ENCODE measurements at regions of chr6 and their contacts with region 1.

Region 1: DNA sequence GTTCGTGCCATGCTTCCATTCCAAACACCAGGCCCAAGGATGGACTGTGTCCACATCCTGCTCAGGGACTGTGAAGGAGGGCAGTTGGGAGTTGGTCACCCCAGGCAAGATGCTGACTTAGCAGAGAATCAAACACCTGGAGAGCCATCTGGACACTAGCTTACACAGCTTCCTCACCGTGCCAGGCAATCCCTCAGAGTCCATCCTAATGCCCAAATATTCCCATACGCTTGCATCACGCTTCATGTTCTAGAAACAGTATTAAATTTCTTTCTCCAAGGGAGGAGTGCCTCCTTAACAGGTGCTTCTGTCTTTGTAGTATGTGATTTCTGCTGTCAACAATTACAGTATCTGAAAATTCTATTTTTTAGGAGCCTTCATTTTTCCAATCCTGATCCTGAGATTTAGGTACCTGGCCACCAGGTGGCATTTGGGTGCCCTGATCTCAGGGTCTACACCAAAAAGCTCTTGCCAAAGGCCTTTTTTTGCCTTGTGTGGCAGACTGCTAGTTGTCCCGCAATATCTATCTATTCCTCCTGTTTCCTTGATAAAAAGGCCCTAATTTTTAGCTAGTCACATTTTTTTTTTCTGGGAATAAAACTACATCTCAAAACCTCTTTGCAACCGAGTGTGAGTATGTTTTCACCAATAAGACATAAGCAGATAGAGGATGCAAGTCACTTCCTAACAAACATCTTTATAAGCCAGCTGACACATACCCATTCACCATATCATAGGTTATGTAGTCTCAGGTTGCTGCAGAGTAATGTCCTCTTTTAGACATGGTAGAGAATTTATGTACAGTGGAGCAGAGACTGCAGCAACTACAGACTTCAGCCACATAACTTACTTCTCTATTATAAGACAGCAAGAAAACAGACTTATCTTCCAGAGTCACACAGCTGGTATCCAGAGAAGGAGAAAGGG is 85.0 kb downstream of the PREP start:
- DNase-seq: no peak
- H3K4me3 ChIP-seq: no peak overlapping the region
- H3K27ac ChIP-seq: no peak overlapping the region
- H3K4me1 ChIP-seq: no peaks in the 10 kb centered on the region
- H3K27me3 ChIP-seq: no peaks in the 10 kb centered on the region
- CTCF ChIP-seq: no peak
- EP300 ChIP-seq: no peak
- POLR2A ChIP-seq: no peak

Region 2: DNA sequence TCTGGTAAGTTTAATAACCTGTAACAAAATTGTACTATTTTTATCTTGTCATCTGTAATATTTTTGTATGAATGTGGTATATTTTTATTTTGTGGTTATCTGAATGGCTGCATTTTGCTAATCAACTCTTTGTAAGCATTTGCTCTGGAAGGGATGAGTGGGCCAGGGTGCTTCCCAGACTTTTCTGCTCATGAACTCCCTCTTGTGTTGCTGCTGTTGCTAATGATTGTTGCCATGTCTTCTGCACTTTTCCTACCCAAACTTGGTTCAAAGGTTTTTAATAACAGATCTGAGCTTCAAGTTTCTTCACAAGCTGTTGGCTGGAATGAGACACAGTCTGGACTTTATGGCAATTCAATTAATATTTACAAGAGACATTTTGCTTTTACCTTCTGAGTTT is 1463.8 kb before region 1 on chr6:
- intact Hi-C with region 1: no loop called
- DNase-seq: no peak
- H3K4me3 ChIP-seq: no peak overlapping the region
- H3K27ac ChIP-seq: no peak overlapping the region
- H3K4me1 ChIP-seq: no peaks in the 10 kb centered on the region
- H3K27me3 ChIP-seq: no peaks in the 10 kb centered on the region
- CTCF ChIP-seq: no peak
- EP300 ChIP-seq: no peak
- POLR2A ChIP-seq: no peak

Region 3: DNA sequence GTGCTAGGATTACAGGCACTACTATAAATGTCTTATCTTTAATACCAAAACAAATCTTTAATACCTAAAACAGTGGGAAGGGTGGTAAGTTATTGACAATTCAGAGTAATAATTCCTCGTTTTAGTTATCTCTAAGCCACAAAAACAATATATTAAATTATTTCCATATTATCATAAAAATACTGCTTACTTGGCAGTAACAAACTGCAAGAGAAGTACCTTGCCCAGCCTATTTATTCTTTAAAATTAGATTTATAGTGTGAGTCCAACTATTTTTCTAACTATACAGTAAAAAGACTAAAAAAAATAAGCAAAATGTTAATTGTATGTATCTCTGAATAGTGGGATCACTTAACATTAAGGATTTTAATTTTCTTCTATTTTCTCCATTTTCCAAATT is 581.3 kb before region 1 on chr6:
- intact Hi-C with region 1: no loop called
- DNase-seq: no peak
- H3K4me3 ChIP-seq: no peak overlapping the region
- H3K27ac ChIP-seq: no peak overlapping the region
- H3K4me1 ChIP-seq: no peaks in the 10 kb centered on the region
- H3K27me3 ChIP-seq: no peaks in the 10 kb centered on the region
- CTCF ChIP-seq: no peak
- EP300 ChIP-seq: no peak
- POLR2A ChIP-seq: no peak

Region 4: DNA sequence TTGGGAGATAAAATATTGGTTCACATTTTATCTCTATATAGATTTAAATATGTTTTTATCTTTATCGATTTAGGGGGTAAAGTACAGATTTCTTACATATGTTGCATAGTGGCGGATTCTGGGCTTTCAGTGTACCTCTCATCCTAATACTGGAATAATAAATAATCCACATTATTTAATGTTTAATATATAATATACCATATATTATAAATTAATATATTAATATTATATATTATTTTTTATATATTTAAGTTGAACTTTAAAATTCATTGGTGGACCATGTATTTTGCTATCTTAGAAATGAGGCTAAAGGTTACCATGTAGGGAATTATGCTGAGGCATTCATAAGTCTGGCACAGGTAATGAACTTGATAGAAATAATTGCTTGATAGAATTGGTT is 48.5 kb before region 1 on chr6:
- intact Hi-C with region 1: loop called in 1 of 4 experiments (anchors 2 kb)
- DNase-seq: no peak
- H3K4me3 ChIP-seq: no peak overlapping the region
- H3K27ac ChIP-seq: no peak overlapping the region
- H3K4me1 ChIP-seq: no peaks in the 10 kb centered on the region
- H3K27me3 ChIP-seq: no peaks in the 10 kb centered on the region
- CTCF ChIP-seq: no peak
- EP300 ChIP-seq: no peak
- POLR2A ChIP-seq: no peak

Region 5: GRCh38 chr6:105336986-105337385 is 19.1 kb after region 1 on chr6:
- intact Hi-C with region 1: loop called in 1 of 4 experiments (anchors 2 kb)
- DNase-seq: no peak
- H3K4me3 ChIP-seq: no peak overlapping the region
- H3K27ac ChIP-seq: no peak overlapping the region
- H3K4me1 ChIP-seq: no peaks in the 10 kb centered on the region
- H3K27me3 ChIP-seq: no peaks in the 10 kb centered on the region
- CTCF ChIP-seq: no peak
- EP300 ChIP-seq: no peak
- POLR2A ChIP-seq: no peak

Region 6: GRCh38 chr6:105500693-105501092 is 182.8 kb after region 1 on chr6:
- intact Hi-C with region 1: no loop called
- DNase-seq: no peak
- H3K4me3 ChIP-seq: no peak overlapping the region
- H3K27ac ChIP-seq: no peak overlapping the region
- H3K4me1 ChIP-seq: no peaks in the 10 kb centered on the region
- H3K27me3 ChIP-seq: no peaks in the 10 kb centered on the region
- CTCF ChIP-seq: no peak
- EP300 ChIP-seq: no peak
- POLR2A ChIP-seq: no peak

Region 7: DNA sequence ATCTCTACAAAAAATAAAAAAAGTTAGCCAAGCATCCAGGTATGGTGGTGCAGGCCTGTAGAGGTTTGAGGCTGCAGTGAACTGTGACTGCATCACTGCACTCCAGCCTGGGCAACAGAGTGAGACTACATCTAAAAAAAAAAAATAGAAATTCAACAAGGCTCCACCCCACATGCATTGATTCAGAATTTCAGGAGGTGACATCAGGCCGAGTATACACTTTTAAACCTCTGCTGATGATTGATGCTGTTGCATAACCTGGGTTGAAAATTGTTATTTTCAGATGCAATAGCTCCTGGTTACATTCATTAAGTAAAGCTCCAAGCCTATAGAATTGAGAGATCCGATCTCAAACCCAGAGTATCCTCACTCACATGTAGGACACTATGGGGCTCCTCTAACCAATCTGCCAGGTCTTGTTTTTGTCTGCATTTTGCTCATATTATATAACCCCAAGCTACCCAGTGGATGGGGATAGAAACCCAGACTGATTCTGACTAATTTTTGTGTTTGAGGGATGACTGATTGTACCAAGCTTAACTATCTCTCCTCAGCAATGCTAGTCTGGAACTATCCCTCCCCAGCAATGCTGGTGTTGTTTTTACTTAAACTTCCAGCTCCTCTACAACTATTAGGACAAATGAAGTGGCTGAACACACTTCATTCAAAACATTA is 208.5 kb after region 1 on chr6:
- intact Hi-C with region 1: no loop called
- DNase-seq: no peak
- H3K4me3 ChIP-seq: no peak overlapping the region
- H3K27ac ChIP-seq: no peak overlapping the region
- H3K4me1 ChIP-seq: no peaks in the 10 kb centered on the region
- H3K27me3 ChIP-seq: no peaks in the 10 kb centered on the region
- CTCF ChIP-seq: no peak
- EP300 ChIP-seq: no peak
- POLR2A ChIP-seq: no peak